Activated naive CD8-positive, alpha-beta T cell treated with anti-CD3 and anti-CD28 coated beads, Interleukin-2, amount 10 ng/mL, durations not matched to agents 7 days and 5 days (primary cell): ENCODE measurements at regions of chr11 and their contacts with region 1.

Region 1: DNA sequence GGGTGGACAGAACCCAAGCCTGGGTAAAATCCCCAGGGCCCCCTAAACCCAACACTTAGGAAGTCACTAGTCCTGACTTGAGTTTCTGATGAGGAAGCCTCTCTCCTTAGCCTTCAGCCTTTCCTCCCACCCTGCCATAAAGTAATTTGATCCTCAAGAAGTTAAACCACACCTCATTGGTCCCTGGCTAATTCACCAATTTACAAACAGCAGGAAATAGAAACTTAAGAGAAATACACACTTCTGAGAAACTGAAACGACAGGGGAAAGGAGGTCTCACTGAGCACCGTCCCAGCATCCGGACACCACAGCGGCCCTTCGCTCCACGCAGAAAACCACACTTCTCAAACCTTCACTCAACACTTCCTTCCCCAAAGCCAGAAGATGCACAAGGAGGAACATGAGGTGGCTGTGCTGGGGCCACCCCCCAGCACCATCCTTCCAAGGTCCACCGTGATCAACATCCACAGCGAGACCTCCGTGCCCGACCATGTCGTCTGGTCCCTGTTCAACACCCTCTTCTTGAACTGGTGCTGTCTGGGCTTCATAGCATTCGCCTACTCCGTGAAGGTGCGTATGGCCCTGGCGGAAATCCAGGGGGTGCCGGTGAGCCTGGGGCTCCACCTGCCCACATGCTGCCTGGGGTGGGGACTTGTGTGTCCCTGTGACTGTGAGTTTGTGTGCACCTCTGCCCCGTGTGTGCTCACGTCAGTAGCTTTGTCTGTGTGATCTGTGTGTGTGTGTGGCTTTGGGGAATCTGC is at the start of gene IFITM1:
- DNase-seq: peak; percentile 78
- ATAC-seq: peak; percentile 41
- H3K4me3 Mint-ChIP-seq: peak within 1 kb of the TSS; percentile 97
- H3K27ac Mint-ChIP-seq: peak within 1 kb of the TSS; percentile 100
- H3K4me1 Mint-ChIP-seq: peaks cover 26% of the 10 kb centered on the region
- H3K27me3 Mint-ChIP-seq: no peaks in the 10 kb centered on the region
- total RNA-seq, gene IFITM1: 1,182 to 1,374 TPM

Region 2: DNA sequence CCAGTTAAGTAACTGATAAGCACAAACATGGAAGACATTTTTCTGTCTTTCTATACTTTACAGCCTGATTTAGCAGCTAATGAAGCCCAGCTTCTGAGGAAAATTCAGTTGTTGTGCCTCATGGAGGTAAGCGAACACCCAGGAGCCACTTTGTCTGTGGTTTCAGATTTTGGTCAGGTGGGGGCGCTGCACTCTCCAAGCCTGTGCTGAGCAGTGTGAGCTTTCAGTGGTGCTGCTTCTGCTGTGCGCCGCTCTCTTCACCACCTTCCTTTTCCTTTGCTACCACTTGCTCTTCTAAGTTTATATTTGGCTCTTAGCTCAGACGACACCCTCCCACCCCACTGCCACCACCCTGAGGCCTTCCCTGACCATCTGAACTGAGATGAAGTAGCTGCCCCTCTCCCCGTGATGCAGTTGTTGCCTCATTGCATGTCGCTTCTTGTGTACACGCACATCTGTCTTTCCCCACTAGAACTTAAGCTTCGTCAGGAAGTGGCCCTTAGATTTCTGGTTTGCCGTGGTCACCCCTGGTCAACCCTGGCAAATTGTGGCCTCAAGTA is 63.1 kb before region 1 on chr11:
- POLR2A ChIA-PET with region 1: interaction called, 21 read pairs
- DNase-seq: peak; percentile 83
- ATAC-seq: peak; percentile 98
- H3K4me3 Mint-ChIP-seq: peak overlapping the region; percentile 63
- H3K27ac Mint-ChIP-seq: peak overlapping the region; percentile 82
- H3K4me1 Mint-ChIP-seq: peaks cover 14% of the 10 kb centered on the region
- H3K27me3 Mint-ChIP-seq: no peaks in the 10 kb centered on the region

Region 3: DNA sequence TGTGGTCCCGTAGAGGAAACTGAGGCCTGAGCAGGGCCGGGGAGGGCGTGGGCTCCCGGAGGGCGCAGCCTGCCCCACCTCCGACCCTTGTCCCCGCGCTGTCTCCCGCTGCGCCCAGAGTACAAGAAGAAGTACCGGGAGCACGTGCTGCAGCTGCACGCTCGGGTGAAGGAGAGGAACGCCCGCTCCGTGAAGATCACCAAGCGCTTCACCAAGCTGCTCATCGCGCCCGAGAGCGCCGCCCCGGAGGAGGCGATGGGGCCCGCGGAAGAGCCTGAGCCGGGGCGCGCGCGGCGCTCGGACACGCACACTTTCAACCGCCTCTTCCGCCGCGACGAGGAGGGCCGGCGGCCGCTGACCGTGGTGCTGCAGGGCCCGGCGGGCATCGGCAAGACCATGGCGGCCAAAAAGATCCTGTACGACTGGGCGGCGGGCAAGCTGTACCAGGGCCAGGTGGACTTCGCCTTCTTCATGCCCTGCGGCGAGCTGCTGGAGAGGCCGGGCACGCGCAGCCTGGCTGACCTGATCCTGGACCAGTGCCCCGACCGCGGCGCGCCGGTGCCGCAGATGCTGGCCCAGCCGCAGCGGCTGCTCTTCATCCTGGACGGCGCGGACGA is 33.9 kb before region 1 on chr11:
- POLR2A ChIA-PET with region 1: interaction called, 178 read pairs
- DNase-seq: peak; percentile 69
- ATAC-seq: peak; percentile 31
- H3K4me3 Mint-ChIP-seq: peak overlapping the region; percentile 89
- H3K27ac Mint-ChIP-seq: peak overlapping the region; percentile 95
- H3K4me1 Mint-ChIP-seq: peaks cover 32% of the 10 kb centered on the region
- H3K27me3 Mint-ChIP-seq: no peaks in the 10 kb centered on the region

Region 4: DNA sequence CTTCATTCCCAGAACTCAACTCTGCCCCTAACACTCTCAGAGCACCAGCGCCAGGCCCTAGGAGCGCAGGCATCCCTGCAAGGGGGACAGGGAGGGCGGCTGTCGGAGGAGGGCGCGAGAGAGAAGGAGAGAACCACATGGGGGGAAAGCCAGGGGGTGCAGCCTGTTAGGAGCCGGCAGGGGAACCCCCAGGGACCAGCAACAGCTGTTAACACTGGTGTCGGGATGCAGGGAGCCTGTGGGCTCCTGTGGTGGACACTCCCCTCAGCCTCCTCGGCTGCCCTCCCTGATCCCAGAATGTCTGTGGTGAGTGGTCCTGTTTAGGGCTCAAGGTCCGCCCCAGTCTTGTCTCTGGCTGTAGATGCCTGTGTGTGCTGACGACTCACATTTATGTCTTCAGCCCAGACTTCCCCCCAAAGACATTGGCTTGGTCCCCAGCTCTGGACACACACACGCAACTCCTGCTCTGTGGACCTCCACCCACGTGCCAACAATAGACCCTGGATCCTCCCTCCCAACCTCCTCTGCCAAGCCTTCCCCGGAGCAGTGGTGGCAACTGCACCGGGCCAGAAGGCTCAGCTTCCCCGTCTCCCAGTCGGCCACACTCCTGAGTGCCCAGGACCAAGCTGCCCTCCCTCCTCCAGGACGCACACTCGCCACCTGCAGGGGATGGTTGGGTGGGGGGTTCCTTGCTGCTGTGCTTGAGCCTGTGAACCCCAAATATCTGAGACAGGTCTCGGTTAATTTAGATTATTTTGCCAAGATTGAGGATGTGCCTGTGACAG is 13.8 kb before region 1 on chr11:
- POLR2A ChIA-PET with region 1: interaction called, 74 read pairs
- DNase-seq: peak; percentile 57
- ATAC-seq: no peak
- H3K4me3 Mint-ChIP-seq: peak overlapping the region; percentile 44
- H3K27ac Mint-ChIP-seq: peak overlapping the region; percentile 58
- H3K4me1 Mint-ChIP-seq: peaks cover 52% of the 10 kb centered on the region
- H3K27me3 Mint-ChIP-seq: peaks cover 8% of the 10 kb centered on the region

Region 5: DNA sequence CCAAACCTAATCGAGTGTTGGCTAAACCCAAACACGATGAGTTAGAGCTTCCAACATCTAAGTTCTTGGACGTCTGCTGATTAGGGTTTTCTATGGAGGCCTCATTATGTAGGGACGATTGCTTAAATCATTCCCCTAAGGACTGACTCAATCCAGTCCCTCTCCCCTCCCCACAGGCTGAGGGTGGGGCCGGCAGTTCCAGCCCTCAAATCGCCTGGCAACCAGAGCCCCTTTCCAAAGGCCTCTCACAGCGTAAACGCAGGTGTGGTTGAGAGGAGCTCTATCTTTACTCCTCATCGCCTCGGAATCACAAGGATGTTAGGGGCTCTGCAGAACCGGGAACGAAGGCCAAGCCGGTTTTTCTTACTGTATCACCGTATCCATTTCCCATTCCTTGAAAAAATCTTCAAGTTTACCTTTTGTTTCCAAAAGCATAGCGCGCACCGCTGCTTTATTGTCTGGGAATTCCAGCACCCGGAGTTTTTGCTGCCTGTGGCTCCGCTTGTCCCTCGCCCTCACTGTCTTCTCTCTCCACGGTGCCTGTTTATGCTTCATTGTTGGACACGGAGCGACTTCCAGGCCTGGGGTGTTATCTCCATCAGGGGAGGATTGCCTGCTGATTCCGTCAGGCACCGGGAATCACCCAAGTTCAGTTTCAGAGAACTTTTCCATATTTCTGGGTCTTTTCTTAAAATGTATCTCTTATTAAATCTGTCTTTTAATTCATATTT is 20.5 kb after region 1 on chr11:
- POLR2A ChIA-PET with region 1: interaction called, 103 read pairs
- DNase-seq: no peak
- ATAC-seq: no peak
- H3K4me3 Mint-ChIP-seq: no peak overlapping the region
- H3K27ac Mint-ChIP-seq: no peak overlapping the region
- H3K4me1 Mint-ChIP-seq: peaks cover 54% of the 10 kb centered on the region
- H3K27me3 Mint-ChIP-seq: no peaks in the 10 kb centered on the region

Region 6: DNA sequence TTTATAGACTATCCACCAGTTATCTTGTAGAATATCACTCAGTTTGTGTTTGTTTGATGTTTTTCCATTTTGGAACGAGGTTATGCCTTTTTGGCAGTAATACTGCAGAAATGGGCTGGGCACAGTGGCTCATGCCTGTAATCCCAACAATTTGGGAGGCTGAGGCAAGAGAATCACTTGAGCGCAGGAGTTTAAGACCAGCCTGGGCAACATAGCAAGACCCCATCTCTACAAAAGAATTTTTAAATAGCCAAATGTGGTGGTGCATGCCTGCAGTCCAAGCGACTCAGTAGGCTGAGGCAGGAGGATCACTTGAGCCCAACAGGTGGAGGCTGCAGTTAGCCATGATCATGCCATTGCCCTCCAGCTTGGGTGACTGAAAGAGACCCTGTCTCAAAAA is 32.6 kb after region 1 on chr11:
- POLR2A ChIA-PET with region 1: no interaction called
- DNase-seq: peak; percentile 7
- ATAC-seq: no peak
- H3K4me3 Mint-ChIP-seq: no peak overlapping the region
- H3K27ac Mint-ChIP-seq: no peak overlapping the region
- H3K4me1 Mint-ChIP-seq: peaks cover 20% of the 10 kb centered on the region
- H3K27me3 Mint-ChIP-seq: no peaks in the 10 kb centered on the region

Region 7: GRCh38 chr11:416757-417621 is 103.0 kb after region 1 on chr11:
- POLR2A ChIA-PET with region 1: interaction called, 11 read pairs
- DNase-seq: peak; percentile 82
- ATAC-seq: peak; percentile 46
- H3K4me3 Mint-ChIP-seq: peak overlapping the region; percentile 97
- H3K27ac Mint-ChIP-seq: peak overlapping the region; percentile 86
- H3K4me1 Mint-ChIP-seq: peaks cover 15% of the 10 kb centered on the region
- H3K27me3 Mint-ChIP-seq: no peaks in the 10 kb centered on the region